HCT116 (cell line): ENCODE measurements at regions of chr15 and their contacts with region 1.

Region 1: DNA sequence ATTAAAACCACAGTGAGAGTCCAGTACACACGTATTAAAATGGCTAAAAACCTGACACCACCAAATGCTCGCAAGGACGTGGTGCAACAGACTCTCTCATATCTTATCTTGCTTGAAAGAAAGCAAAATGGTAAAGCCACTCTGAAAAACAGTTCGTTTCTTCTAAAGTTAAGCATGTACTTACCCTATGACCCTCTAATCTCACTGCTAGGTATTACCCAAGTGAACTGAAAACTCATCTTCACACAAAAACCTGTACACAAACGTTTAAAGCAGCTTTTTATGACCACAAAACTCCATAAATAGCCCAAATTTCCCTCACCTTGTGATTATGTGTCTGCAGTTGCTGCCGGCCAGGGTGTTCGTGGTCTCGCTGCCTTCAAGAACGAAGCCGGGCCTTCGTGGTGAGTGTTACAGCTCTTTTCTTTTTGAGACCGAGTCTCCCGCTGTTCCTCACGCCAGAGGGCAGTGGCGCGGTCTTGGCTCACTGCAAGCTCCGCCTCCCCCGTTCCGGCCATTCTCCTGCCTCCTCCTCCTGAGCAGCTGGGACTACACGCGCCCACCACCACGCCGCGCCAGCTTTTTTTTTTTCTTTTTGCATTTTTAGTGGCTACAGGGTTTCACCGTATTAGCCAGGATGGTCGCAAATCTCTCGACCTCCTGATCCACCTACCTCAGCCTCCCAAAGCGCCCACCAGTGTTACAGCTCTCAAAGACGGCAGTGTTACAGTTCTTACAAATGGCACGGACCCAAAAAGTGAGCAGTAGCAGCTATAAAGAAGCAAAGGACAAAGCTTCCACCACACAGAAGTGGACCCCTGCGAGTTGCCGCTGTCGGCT is 165.4 kb downstream of the TJP1 start:
- DNase-seq: peak; percentile 74
- ATAC-seq: peak; percentile 99
- H3K4me3 ChIP-seq: peak overlapping the region; percentile 27 to 54
- H3K27ac ChIP-seq: no peak overlapping the region
- H3K4me1 ChIP-seq: peaks cover 3 to 10% of the 10 kb centered on the region in 2 experiments; a peak in 3 of 4 replicates
- H3K27me3 ChIP-seq: no peaks in the 10 kb centered on the region
- CTCF ChIP-seq: peak; percentile 28 to 58 (median 48); a peak in 5 of 6 replicates
- POLR2A ChIP-seq: no peak
- RAD21 ChIP-seq: peak; percentile 27; the same call in 1 of the 2 replicates

Region 2: GRCh38 chr15:29674661-29675533 is 18.0 kb after region 1 on chr15:
- CTCF ChIA-PET with region 1: no interaction called
- POLR2A ChIA-PET with region 1: no interaction called
- RAD21 ChIA-PET with region 1: no interaction called
- intact Hi-C with region 1: no loop called
- DNase-seq: no peak
- ATAC-seq: no peak
- H3K4me3 ChIP-seq: no peak overlapping the region
- H3K27ac ChIP-seq: no peak overlapping the region
- H3K4me1 ChIP-seq: peaks cover 6 to 17% of the 10 kb centered on the region in 2 experiments; a peak in 3 of 4 replicates
- H3K27me3 ChIP-seq: no peaks in the 10 kb centered on the region
- CTCF ChIP-seq: no peak
- POLR2A ChIP-seq: no peak
- RAD21 ChIP-seq: no peak

Region 3: DNA sequence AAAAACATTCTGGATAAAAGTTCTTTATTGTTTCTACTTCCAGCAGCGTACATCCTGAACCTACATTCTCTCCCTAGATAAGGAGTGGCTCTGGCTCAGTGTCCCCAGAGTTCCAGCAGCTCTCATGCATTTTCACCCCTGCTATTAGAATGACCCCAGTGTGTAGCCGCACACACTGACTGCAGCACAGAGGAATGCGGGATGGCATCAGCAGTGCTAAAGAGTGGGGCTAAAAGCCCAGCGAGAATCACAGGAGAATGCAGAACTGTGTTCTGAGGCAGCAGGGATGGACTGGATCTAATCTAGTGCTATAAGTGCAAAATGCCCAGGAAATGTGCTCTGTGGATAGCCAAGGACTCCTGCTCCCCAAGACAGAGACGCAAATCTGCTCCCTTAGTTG is 231.8 kb after region 1 on chr15:
- CTCF ChIA-PET with region 1: no interaction called
- POLR2A ChIA-PET with region 1: no interaction called
- RAD21 ChIA-PET with region 1: no interaction called
- intact Hi-C with region 1: no loop called
- DNase-seq: no peak
- ATAC-seq: no peak
- H3K4me3 ChIP-seq: no peak overlapping the region
- H3K27ac ChIP-seq: no peak overlapping the region
- H3K4me1 ChIP-seq: no peaks in the 10 kb centered on the region
- H3K27me3 ChIP-seq: no peaks in the 10 kb centered on the region
- CTCF ChIP-seq: no peak
- POLR2A ChIP-seq: no peak
- RAD21 ChIP-seq: no peak

Region 4: DNA sequence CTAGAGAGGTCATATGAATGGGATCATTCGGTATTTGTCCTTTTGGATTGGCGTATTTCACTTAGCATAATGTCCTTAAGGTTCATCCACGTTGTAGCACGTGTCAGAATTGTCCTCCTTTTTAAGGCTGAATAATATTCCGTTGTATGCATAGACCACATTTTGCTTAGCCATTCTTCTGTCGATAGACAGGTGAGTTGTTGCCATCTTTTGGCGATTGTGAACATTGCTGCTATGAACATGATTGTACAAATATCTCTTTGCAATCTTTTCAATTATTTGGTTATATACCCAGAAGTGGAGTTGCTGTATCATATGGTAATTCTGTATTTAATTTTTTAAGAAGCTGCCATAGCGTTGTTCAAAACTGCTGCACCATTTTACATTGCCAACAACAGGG is 373.5 kb after region 1 on chr15:
- CTCF ChIA-PET with region 1: no interaction called
- POLR2A ChIA-PET with region 1: no interaction called
- RAD21 ChIA-PET with region 1: no interaction called
- intact Hi-C with region 1: loop called (anchors 2 kb)
- DNase-seq: peak; percentile 13
- ATAC-seq: no peak; the same call in 1 of the 2 replicates
- H3K4me3 ChIP-seq: no peak overlapping the region
- H3K27ac ChIP-seq: no peak overlapping the region
- H3K4me1 ChIP-seq: no peaks in the 10 kb centered on the region
- H3K27me3 ChIP-seq: no peaks in the 10 kb centered on the region
- CTCF ChIP-seq: peak; percentile 31 to 61 (median 37); a peak in 4 of 6 replicates
- POLR2A ChIP-seq: no peak
- RAD21 ChIP-seq: peak; percentile 54